ENCODE measurements at regions of chr15 and their contacts with region 1.

Region 1: DNA sequence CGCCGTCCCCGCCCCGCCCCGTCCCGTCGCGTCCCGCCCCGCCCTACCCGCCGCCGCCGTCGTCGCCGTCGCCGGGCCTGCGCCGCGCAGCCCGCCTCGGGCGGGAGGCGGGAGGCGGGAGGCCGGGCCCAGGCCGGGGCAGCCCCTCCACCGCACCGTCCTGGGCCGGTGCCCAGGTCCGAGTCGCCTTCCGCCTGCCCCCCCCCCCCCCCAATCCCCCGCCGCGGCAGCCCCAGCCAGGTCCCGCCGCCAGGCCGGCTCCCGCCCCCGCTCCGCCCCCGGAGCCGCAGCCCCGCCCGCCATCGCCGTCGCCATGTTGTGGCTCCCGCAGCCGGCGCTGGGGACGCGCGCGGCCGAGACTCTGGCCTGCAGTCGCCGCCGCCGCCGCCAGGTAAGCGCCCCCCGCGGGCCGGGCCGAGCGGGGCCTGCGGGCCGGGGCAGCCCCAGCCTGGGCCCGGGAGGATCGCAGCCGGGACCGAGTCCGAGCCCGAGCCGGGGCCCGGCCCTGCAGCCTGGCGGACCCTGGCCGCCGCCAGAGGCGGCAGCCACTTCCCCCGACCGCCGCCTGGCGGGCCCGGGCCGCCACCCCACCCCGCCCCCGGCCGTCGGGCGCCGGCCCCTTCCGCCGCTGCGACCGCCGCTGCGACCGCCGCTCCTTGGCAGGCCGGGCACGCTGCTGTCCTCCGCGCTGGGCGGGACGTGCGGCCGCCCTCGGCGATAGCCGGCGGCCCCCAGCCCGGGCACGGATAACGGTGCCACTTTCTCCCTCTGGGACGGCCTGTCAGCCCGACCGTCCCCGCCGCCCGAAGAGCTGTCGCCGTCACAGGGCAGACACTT is at the start of gene ZNF592:
- DNase-seq: peak; percentile 78 to 87 (median 80)
- H3K4me3 ChIP-seq: peak within 1 kb of the TSS; percentile 88 to 93
- H3K4me3 Mint-ChIP-seq: peak within 1 kb of the TSS; percentile 93 to 99 (median 98)
- H3K27ac ChIP-seq: peak within 1 kb of the TSS; percentile 80
- H3K27ac Mint-ChIP-seq: peak within 1 kb of the TSS; percentile 97 to 99 (median 99)
- H3K4me1 ChIP-seq: peaks cover 68% of the 10 kb centered on the region
- H3K4me1 Mint-ChIP-seq: peaks cover 52 to 74% (median 64%) of the 10 kb centered on the region in 4 donors
- H3K27me3 ChIP-seq: no peaks in the 10 kb centered on the region
- H3K27me3 Mint-ChIP-seq: no peaks in the 10 kb centered on the region
- total RNA-seq, gene ZNF592: 40.8 to 42.6 TPM

Region 2: GRCh38 chr15:84600851-84601838 is 147.3 kb before region 1 on chr15 and contains the start of gene ZSCAN2:
- CTCF ChIA-PET with region 1: interaction called, 3 read pairs
- POLR2A ChIA-PET with region 1: interaction called, 3 read pairs
- intact Hi-C with region 1: loop called (anchors 2 kb)
- DNase-seq: peak; percentile 89 to 94 (median 91)
- H3K4me3 ChIP-seq: peak within 1 kb of the TSS; percentile 85 to 93
- H3K4me3 Mint-ChIP-seq: peak within 1 kb of the TSS; percentile 91 to 99 (median 96)
- H3K27ac ChIP-seq: peak within 1 kb of the TSS; percentile 59
- H3K27ac Mint-ChIP-seq: peak within 1 kb of the TSS; percentile 83 to 96 (median 92)
- H3K4me1 ChIP-seq: peaks cover 50% of the 10 kb centered on the region
- H3K4me1 Mint-ChIP-seq: peaks cover 47 to 77% (median 64%) of the 10 kb centered on the region in 4 donors
- H3K27me3 ChIP-seq: no peaks in the 10 kb centered on the region
- H3K27me3 Mint-ChIP-seq: no peaks in the 10 kb centered on the region
- total RNA-seq, gene ZSCAN2: 11.4 to 14.1 TPM

Region 3: GRCh38 chr15:84702961-84703482 is 45.5 kb before region 1 on chr15:
- CTCF ChIA-PET with region 1: interaction called, 8 read pairs
- POLR2A ChIA-PET with region 1: interaction called, 6 read pairs
- intact Hi-C with region 1: loop called (anchors 10 kb)
- DNase-seq: no peak
- H3K4me3 ChIP-seq: no peak overlapping the region
- H3K4me3 Mint-ChIP-seq: peak overlapping the region in 4 of 8 donors; percentile 2 to 16 (median 9)
- H3K27ac ChIP-seq: no peak overlapping the region
- H3K27ac Mint-ChIP-seq: peak overlapping the region in 6 of 7 donors; percentile 22 to 77 (median 50)
- H3K4me1 ChIP-seq: peaks cover 61% of the 10 kb centered on the region
- H3K4me1 Mint-ChIP-seq: peaks cover 47 to 81% (median 61%) of the 10 kb centered on the region in 4 donors
- H3K27me3 ChIP-seq: no peaks in the 10 kb centered on the region
- H3K27me3 Mint-ChIP-seq: no peaks in the 10 kb centered on the region

Region 4: GRCh38 chr15:84734794-84735479 is 13.6 kb before region 1 on chr15:
- CTCF ChIA-PET with region 1: interaction called, 31 read pairs
- POLR2A ChIA-PET with region 1: interaction called, 208 read pairs
- intact Hi-C with region 1: loop called (anchors 1 kb)
- DNase-seq: peak; percentile 72 to 88 (median 77)
- H3K4me3 ChIP-seq: peak overlapping the region; percentile 25 to 46
- H3K4me3 Mint-ChIP-seq: peak overlapping the region; percentile 77 to 90 (median 81)
- H3K27ac ChIP-seq: peak overlapping the region; percentile 41
- H3K27ac Mint-ChIP-seq: peak overlapping the region; percentile 84 to 95 (median 93)
- H3K4me1 ChIP-seq: peaks cover 53% of the 10 kb centered on the region
- H3K4me1 Mint-ChIP-seq: peaks cover 29 to 50% (median 38%) of the 10 kb centered on the region in 4 donors
- H3K27me3 ChIP-seq: no peaks in the 10 kb centered on the region
- H3K27me3 Mint-ChIP-seq: no peaks in the 10 kb centered on the region

Region 5: DNA sequence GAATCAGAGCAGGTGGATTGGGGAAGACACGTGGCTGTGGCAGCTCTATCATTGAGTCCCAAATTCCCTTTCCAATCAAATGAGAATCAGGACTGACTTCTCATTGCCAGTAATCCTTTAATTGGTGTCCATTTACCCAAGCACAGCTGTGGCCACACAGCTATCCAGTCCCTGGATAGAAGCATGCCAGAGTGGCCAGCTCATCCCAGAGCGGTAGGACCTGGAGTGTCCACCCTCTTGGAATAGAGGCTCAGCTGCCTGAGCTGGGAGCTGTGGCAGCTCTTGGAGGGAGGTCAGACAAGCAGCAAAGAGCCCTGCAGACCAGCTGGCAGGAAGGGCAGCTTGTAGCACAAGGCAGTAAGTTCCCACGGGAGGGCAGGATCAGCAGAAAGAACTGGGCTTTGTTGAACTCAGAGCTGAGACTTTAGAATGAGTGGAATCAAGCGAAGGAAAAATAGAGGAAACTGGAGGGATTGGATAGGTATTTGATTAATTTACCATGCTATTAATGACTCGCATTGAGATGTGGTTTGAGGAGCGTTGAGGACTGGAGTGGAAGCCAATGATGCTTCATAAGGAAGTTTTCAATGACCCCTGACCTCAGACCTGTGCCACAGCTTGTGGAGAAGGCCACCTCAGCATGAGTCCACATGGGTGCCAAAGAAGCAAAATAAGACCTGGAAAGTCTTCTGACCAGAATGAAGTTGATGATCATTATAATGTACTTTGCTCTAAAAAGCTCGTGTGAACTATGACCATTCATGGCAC is 61.8 kb after region 1 on chr15:
- CTCF ChIA-PET with region 1: no interaction called
- POLR2A ChIA-PET with region 1: no interaction called
- intact Hi-C with region 1: no loop called
- DNase-seq: no peak
- H3K4me3 ChIP-seq: no peak overlapping the region
- H3K4me3 Mint-ChIP-seq: no peak overlapping the region
- H3K27ac ChIP-seq: no peak overlapping the region
- H3K27ac Mint-ChIP-seq: no peak overlapping the region
- H3K4me1 ChIP-seq: no peaks in the 10 kb centered on the region
- H3K4me1 Mint-ChIP-seq: peaks cover 0 to 6% (median 0%) of the 10 kb centered on the region in 4 donors
- H3K27me3 ChIP-seq: no peaks in the 10 kb centered on the region
- H3K27me3 Mint-ChIP-seq: peaks cover 0 to 1% of the 10 kb centered on the region in 2 donors

Region 6: DNA sequence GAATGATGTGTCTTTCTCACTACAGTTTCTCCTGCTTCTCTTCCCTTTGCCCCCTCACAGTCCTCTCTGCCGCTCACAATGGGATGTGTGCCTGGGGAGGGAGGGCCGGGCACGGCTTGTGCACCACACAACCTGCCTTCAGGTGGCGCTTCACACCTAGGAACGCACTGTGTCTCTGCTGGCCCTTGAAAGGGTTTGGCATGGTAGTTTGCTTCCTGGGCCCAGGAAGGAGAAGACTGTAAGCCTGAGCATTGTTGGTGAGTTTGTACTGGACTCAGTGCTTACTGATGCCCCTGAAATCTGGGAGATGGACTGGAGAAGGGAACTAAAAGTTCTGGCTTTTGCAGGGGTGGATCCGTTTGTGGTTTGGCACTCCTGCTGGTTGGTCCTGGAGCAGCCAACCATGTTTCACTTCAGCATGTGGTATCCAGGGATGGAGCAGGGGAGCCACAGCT is 77.9 kb after region 1 on chr15:
- CTCF ChIA-PET with region 1: no interaction called
- POLR2A ChIA-PET with region 1: no interaction called
- intact Hi-C with region 1: no loop called
- DNase-seq: no peak
- H3K4me3 ChIP-seq: no peak overlapping the region
- H3K4me3 Mint-ChIP-seq: no peak overlapping the region
- H3K27ac ChIP-seq: no peak overlapping the region
- H3K27ac Mint-ChIP-seq: no peak overlapping the region
- H3K4me1 ChIP-seq: no peaks in the 10 kb centered on the region
- H3K4me1 Mint-ChIP-seq: no peaks in the 10 kb centered on the region
- H3K27me3 ChIP-seq: no peaks in the 10 kb centered on the region
- H3K27me3 Mint-ChIP-seq: no peaks in the 10 kb centered on the region